Activated CD4-positive, alpha-beta T cell treated with anti-CD3 and anti-CD28 coated beads for 36 hours (primary cell): ENCODE measurements at regions of chr14 and their contacts with region 1.

Region 1: GRCh38 chr14:102362545-102363181 is at the starts of genes CINP and TECPR2:
- DNase-seq: peak; percentile 99
- ATAC-seq: peak; percentile 78
- H3K4me3 Mint-ChIP-seq: no peak within 1 kb of the TSS
- H3K27ac Mint-ChIP-seq: peak within 1 kb of the TSS; percentile 96
- H3K4me1 Mint-ChIP-seq: peaks cover 36% of the 10 kb centered on the region
- H3K27me3 Mint-ChIP-seq: no peaks in the 10 kb centered on the region
- total RNA-seq, gene CINP: 47.0 to 51.4 TPM
- total RNA-seq, gene TECPR2: 5.6 to 6.9 TPM

Region 2: DNA sequence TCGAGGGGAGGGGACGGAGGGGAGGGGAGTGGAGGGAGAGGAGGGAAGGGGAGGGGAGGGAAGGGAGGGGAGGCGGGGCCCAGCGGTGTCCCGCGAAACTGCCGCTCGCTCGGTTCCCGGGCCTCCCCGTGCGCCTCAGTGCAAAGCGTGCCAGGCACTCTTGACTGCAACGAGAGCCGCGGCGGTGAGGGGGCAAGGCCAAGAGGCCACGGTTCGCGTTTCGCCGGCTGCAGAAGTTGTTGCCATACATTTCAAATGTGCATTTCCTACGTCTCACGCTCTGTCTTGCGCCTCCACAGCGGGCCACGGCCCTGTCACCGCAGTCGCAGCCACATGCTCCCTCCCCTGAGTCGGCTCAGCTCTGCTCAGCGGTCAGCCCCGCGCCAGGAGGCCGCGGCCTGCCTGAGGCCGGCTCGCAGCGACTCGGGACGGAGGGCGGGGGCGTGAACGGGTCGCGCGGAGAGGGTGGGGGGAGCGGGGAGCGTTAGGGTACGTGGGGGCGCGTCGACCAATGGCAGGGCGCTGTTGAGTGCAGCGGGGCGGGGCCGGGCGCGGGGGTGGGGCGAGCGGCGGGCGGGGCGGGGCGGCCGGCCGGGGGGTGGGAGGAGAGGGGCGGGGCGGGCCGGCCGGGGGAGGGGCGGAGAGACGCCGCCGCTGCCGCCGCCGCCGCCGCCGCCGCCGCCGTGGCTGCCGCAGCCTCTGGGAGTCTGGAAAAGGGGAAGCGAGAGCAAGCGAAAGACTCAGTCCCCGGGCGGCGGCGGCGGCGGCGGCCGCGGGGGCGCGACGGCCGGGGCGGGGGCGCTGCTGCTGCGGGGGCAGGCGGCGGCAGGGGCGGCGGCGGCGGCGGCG is 601.4 kb before region 1 on chr14 and contains the start of gene PPP2R5C:
- CTCF ChIA-PET with region 1: no interaction called
- POLR2A ChIA-PET with region 1: no interaction called
- intact Hi-C with region 1: loop called in 1 of 2 experiments (anchors 1 kb)
- DNase-seq: peak; percentile 94
- ATAC-seq: peak; percentile 65
- H3K4me3 Mint-ChIP-seq: peak within 1 kb of the TSS; percentile 85
- H3K27ac Mint-ChIP-seq: peak within 1 kb of the TSS; percentile 78
- H3K4me1 Mint-ChIP-seq: peaks cover 43% of the 10 kb centered on the region
- H3K27me3 Mint-ChIP-seq: no peaks in the 10 kb centered on the region
- total RNA-seq, gene PPP2R5C: 232 to 281 TPM

Region 3: DNA sequence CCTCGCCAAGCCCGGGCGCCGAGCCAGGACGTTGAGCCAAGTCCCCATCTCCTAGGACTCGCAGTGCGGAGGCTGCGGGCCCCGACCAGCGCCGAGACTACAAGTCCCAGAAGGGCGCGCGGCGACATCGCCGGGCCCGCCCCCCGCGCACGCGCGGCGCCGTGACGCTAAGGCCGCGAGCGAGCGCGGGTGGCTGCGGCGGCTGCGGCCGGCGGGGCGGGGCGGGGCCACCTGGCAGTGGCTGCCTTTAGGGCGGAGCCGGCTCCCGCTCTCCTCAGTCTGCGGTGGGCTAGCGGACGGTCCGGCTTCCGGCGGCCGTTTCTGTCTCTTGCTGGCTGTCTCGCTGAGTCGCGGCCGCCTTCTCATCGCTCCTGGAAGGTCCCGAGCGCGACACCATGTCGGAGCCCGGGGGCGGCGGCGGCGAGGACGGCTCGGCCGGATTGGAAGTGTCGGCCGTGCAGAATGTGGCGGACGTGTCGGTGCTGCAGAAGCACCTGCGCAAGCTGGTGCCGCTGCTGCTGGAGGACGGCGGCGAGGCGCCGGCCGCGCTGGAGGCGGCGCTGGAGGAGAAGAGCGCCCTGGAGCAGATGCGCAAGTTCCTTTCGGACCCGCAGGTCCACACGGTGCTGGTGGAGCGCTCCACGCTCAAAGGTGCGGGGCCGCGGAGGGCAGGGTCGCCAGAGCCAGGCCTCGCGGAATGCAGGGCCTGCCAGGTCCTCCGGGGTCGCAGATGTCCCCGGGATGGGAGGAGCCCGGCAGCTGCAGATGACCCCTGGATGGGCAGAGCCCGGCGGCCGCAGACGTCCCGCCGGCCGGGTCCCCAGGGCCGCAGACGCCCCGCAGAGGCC is 398.1 kb before region 1 on chr14 and contains the start of gene DYNC1H1:
- CTCF ChIA-PET with region 1: no interaction called
- POLR2A ChIA-PET with region 1: no interaction called
- intact Hi-C with region 1: loop called in 1 of 2 experiments (anchors 1 kb)
- DNase-seq: peak; percentile 93
- ATAC-seq: peak; percentile 82
- H3K4me3 Mint-ChIP-seq: peak within 1 kb of the TSS; percentile 89
- H3K27ac Mint-ChIP-seq: peak within 1 kb of the TSS; percentile 91
- H3K4me1 Mint-ChIP-seq: peaks cover 39% of the 10 kb centered on the region
- H3K27me3 Mint-ChIP-seq: no peaks in the 10 kb centered on the region
- total RNA-seq, gene DYNC1H1: 283 to 293 TPM

Region 4: DNA sequence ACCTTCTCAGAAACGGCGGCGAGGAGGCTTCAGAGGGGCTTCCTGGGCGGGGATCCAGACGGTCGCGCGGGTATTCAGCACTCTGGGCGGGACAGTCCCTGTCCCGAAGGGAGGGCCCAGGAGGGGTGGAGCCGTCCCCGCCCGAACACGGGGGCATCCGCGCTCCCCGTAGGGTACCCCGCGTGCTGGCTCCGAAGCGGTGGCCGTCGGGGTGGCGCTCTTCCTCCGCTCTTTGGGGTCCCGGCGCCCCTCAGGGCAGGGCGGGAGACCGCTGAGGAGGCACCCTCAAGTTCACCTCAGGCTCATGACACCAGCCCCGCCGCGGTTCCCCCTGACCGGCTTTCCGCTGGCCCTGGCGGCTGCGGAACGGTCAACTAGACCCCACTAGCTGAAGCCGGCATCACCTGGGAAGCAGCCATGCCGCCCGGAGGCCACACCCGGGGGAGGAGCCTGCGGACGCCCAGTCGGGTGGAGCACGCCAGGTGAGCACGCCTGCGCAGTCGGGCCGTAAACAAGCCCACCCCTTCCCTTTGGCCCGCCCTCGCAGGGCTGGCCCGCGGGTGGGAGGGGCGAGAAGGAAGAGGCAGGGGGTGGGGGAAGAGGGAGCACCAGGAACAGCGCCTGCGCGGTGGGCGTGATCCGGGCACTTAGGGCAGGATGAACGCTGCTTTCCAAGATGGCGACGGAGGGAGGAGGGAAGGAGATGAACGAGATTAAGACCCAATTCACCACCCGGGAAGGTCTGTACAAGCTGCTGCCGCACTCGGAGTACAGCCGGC is 223.2 kb before region 1 on chr14 and contains the start of gene WDR20:
- CTCF ChIA-PET with region 1: no interaction called
- POLR2A ChIA-PET with region 1: no interaction called
- intact Hi-C with region 1: loop called in 1 of 2 experiments (anchors 1 kb)
- DNase-seq: peak; percentile 100
- ATAC-seq: peak; percentile 94
- H3K4me3 Mint-ChIP-seq: peak within 1 kb of the TSS; percentile 96
- H3K27ac Mint-ChIP-seq: peak within 1 kb of the TSS; percentile 94
- H3K4me1 Mint-ChIP-seq: peaks cover 21% of the 10 kb centered on the region
- H3K27me3 Mint-ChIP-seq: no peaks in the 10 kb centered on the region
- total RNA-seq, gene WDR20: 18.2 to 24.8 TPM

Region 5: DNA sequence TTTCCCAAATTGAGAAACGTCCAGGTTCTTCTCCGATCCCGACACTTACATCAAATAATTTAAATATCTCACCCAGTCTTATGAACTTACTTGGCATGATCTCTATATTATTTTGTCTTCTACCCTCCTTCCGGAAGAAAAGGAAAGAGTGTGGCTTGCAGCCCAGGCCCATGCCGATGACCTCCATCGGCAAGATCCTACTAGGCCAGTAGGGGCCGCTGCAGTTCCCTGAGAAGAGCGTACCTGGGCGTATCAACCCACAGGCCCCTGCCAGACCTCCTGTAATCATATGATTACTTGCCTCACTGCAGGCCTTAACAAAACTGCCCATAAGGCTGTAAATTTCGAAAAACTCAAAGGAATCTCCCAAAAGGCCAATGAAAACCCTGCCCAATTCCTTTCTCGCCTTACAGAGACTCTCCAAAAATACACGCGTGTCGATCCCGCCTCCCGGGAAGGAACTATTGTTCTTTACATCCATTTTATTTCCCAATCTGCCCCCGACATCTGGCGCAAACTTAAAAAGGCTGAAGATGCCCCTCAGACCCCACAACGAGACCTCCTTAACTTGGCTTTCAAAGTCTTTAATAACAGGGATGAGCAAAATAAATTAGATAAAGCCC is 127.3 kb before region 1 on chr14:
- CTCF ChIA-PET with region 1: no interaction called
- POLR2A ChIA-PET with region 1: no interaction called
- intact Hi-C with region 1: no loop called
- DNase-seq: peak; percentile 91
- ATAC-seq: peak; percentile 100
- H3K4me3 Mint-ChIP-seq: no peak overlapping the region
- H3K27ac Mint-ChIP-seq: no peak overlapping the region
- H3K4me1 Mint-ChIP-seq: no peaks in the 10 kb centered on the region
- H3K27me3 Mint-ChIP-seq: no peaks in the 10 kb centered on the region

Region 6: GRCh38 chr14:102485696-102486488 is 123.2 kb after region 1 on chr14:
- CTCF ChIA-PET with region 1: no interaction called
- POLR2A ChIA-PET with region 1: no interaction called
- intact Hi-C with region 1: no loop called
- DNase-seq: no peak
- ATAC-seq: no peak
- H3K4me3 Mint-ChIP-seq: no peak overlapping the region
- H3K27ac Mint-ChIP-seq: no peak overlapping the region
- H3K4me1 Mint-ChIP-seq: no peaks in the 10 kb centered on the region
- H3K27me3 Mint-ChIP-seq: no peaks in the 10 kb centered on the region

Region 7: DNA sequence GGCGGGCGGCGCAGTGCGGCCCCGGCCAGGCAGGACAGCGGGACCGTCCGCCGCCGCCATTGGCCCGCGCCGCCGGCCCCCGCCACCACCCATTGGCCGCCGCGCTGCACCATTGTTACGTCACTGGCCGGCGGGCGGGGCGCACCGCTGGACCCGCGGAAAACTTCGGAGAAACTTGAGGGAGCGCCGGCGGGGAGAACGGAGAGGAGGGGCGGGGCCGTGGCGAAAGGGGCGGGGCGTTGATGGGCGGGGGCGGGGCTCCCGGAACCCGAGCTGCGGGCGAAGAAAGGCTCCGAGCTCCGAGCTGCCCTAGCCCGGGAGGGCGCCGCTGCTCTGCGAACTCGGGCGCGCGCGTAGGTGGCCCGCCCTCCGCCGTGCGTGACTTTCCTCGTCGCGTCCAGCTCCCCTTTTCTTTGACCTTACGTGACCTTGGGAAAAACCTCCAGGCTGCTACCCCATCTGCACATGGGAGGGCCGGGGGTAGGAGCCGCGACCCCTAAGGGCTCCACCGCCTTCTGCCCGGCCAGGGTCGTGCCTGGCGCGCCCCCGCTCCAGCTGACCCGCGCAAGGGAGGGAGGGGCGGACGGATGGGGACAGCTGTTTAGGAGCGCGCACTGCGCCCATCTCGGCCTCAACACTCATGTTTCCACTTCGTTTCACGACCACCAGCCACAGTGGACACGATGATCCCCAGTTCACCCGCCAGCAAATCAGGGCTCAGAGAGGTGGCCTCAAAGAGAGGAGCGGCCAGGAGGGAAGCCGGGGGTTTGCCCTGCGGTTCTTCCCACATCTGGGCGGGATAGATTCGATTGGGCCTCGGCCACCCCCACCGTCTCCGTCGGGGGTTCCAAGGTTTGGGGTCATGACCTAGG is 147.3 kb after region 1 on chr14 and contains the start of gene ANKRD9:
- CTCF ChIA-PET with region 1: no interaction called
- POLR2A ChIA-PET with region 1: interaction called, 3 read pairs
- intact Hi-C with region 1: loop called in 1 of 2 experiments (anchors 1 kb)
- DNase-seq: peak; percentile 95
- ATAC-seq: peak; percentile 89
- H3K4me3 Mint-ChIP-seq: peak within 1 kb of the TSS; percentile 75
- H3K27ac Mint-ChIP-seq: peak within 1 kb of the TSS; percentile 51
- H3K4me1 Mint-ChIP-seq: peaks cover 16% of the 10 kb centered on the region
- H3K27me3 Mint-ChIP-seq: peaks cover 2% of the 10 kb centered on the region
- total RNA-seq, gene ANKRD9: 4.8 to 9.3 TPM

Region 8: DNA sequence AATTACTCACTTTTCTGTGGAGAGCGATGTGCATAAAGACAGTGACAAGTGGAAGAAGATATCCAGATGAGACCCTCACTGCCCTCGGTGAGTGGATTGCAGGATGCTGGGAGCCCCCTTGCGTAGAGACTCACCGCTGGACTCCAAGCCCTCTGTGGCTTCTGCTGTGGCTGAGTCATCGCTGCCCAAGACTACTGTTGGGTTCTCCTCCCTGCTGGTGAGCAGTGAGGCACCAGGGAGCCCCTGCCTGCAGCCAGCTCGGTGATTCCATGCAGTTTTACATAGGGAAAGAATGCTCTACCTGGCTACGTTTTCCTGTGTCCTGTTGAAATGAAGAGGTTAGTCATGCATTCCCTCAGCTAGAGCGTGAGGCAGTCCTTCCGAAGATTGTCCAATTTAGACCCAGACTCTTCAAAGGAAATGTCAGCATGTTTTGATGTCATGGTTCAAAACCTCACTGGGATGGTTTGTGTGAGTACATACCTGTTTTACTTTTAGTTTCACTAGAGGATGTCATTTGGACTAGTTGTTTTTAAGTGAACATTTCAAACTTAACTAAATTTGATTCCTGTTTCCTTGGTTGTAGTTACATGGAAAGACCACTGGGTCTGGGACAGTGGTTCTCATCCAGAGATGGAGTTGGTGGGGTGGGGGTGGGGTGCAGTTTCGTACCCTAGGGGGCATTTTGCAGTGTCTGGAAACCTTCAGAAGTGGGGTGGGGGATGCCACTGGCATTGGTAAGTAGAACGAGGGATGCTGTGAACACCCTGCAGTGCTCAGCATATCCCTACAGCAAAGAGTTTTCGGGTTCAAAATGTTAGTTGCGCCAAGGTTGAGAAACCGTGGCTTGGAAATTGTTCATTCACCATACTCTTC is 442.9 kb after region 1 on chr14:
- CTCF ChIA-PET with region 1: no interaction called
- POLR2A ChIA-PET with region 1: no interaction called
- intact Hi-C with region 1: loop called in 1 of 2 experiments (anchors 1 kb)
- DNase-seq: peak; percentile 76
- ATAC-seq: peak; percentile 57
- H3K4me3 Mint-ChIP-seq: peak overlapping the region; percentile 65
- H3K27ac Mint-ChIP-seq: peak overlapping the region; percentile 96
- H3K4me1 Mint-ChIP-seq: peaks cover 78% of the 10 kb centered on the region
- H3K27me3 Mint-ChIP-seq: no peaks in the 10 kb centered on the region

Region 9: DNA sequence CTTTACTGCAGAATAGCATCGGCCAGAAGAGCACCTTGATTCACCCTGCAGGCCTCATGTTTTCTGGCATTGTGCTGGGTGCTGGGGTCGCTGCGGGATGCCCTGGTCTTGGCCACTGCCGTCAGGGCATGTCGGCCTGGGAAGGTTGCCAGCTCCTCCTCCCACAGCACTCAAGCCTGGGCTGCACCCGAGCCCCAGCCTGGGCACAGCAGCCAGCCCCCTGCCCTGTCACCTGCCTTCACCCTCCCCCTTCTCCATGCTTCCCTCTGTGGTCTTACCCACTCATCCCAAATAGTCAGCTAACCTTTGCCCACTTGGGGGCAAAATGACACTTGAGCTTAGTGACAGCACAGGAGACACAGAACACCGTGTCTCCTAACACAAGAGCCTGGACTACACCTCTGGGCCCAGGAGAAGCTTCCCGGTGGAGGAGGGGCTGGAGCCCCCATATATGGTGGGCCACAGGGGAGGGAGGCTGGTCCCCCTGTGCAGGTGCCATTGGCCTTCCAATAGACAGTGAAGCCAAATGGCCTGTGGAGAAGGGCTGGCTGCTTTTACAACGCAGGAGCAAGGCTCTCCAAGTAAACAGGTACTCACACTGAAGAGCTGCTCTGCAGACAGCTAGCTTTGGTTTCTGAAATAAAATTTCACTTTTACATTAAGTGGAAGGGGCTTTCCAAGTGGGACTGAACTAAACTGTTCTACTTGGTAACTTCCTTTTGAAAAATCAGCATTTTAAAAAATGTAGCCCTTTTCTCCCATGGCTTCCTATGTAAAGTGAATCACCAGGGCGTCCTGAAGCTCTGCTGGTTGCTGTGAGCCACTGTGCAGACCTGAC is 508.6 kb after region 1 on chr14:
- CTCF ChIA-PET with region 1: no interaction called
- POLR2A ChIA-PET with region 1: no interaction called
- intact Hi-C with region 1: no loop called
- DNase-seq: no peak
- ATAC-seq: peak; percentile 69
- H3K4me3 Mint-ChIP-seq: no peak overlapping the region
- H3K27ac Mint-ChIP-seq: peak overlapping the region; percentile 68
- H3K4me1 Mint-ChIP-seq: peaks cover 22% of the 10 kb centered on the region
- H3K27me3 Mint-ChIP-seq: no peaks in the 10 kb centered on the region

Region 10: GRCh38 chr14:103078093-103078749 is 715.6 kb after region 1 on chr14:
- CTCF ChIA-PET with region 1: no interaction called
- POLR2A ChIA-PET with region 1: no interaction called
- intact Hi-C with region 1: loop called in 1 of 2 experiments (anchors 5 kb)
- DNase-seq: peak; percentile 89
- ATAC-seq: peak; percentile 85
- H3K4me3 Mint-ChIP-seq: no peak overlapping the region
- H3K27ac Mint-ChIP-seq: no peak overlapping the region
- H3K4me1 Mint-ChIP-seq: no peaks in the 10 kb centered on the region
- H3K27me3 Mint-ChIP-seq: peaks cover 4% of the 10 kb centered on the region